Activated CD4-positive, alpha-beta T cell treated with anti-CD3 and anti-CD28 coated beads for 36 hours (primary cell): ENCODE measurements at regions of chr12 and their contacts with region 1.

Region 1: DNA sequence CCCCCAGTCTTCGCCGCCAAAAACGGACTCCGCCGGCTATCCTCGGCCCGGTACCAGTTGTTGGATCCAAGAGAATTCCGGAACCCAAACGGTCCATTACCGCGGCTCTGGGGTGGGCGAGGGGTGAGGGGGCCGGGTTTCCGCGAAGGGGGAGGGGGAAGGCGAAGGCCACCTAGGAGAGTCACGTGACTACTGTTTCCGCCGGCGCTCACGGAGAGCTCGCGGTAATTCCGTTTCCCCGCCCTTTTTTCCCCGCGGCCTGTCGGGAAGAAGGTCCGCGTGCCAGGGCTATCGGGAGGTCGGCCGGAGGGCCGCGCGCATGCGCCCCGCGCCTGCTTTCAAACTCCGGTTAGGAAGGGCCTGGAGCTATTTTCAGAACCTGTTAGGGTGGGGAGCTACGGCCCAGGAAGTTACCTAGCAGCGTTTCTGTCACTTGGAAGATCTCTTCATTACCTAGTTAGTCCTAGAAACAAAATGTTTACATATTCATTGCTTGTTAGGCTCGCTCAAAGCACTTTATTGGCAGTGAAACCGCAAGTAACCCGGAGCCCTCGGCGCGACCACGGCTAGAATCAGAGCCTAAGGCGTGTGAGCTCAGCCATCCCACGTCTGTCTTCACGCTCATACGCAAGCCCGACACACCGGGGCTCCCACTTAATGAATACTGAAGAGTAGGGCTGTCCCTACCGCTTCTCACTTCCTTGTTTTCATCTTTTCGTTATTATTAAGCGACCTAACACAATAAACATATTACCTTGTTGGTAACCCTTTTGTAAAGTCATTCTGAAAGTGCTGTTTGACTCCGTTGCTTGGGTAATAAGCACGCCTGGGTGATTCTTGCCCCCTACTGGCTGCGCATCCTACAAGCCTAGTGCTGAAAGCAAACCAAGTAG is 624 bp upstream of the SBNO1 start:
- DNase-seq: peak; percentile 98
- ATAC-seq: peak; percentile 82
- H3K4me3 Mint-ChIP-seq: peak overlapping the region; percentile 86
- H3K27ac Mint-ChIP-seq: peak overlapping the region; percentile 98
- H3K4me1 Mint-ChIP-seq: peaks cover 19% of the 10 kb centered on the region
- H3K27me3 Mint-ChIP-seq: no peaks in the 10 kb centered on the region

Region 2: GRCh38 chr12:122974274-122974891 is 390.9 kb before region 1 on chr12:
- CTCF ChIA-PET with region 1: no interaction called
- POLR2A ChIA-PET with region 1: interaction called, 3 read pairs
- intact Hi-C with region 1: loop called in 1 of 2 experiments (anchors 1 kb)
- DNase-seq: peak; percentile 99
- ATAC-seq: peak; percentile 86
- H3K4me3 Mint-ChIP-seq: peak overlapping the region; percentile 95
- H3K27ac Mint-ChIP-seq: peak overlapping the region; percentile 100
- H3K4me1 Mint-ChIP-seq: peaks cover 21% of the 10 kb centered on the region
- H3K27me3 Mint-ChIP-seq: no peaks in the 10 kb centered on the region

Region 3: DNA sequence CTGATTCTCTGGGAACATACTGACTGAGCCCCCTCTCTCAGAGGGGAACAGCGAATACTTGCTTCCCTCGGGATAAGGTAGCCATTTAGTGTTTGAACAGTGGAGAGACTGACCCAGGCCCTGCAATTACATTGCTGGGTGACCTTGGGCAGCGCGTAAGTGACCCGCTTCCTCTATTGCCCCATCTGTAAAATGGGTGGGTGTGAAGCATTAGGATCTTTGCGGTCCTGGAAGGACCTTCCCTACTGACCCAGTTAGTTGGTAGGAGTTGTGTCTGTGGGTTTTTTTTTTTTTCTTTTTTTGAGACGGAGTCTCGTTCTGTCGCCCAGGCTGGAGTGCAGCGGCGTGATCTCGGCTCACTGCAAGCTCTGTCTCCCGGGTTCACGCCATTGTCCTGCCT is 17.4 kb after region 1 on chr12:
- CTCF ChIA-PET with region 1: interaction called, 20 read pairs
- POLR2A ChIA-PET with region 1: interaction called, 35 read pairs
- intact Hi-C with region 1: loop called (anchors 1 kb)
- DNase-seq: no peak
- ATAC-seq: no peak
- H3K4me3 Mint-ChIP-seq: peak overlapping the region; percentile 50
- H3K27ac Mint-ChIP-seq: no peak overlapping the region
- H3K4me1 Mint-ChIP-seq: peaks cover 8% of the 10 kb centered on the region
- H3K27me3 Mint-ChIP-seq: no peaks in the 10 kb centered on the region

Region 4: GRCh38 chr12:123445388-123446351 is 80.4 kb after region 1 on chr12:
- CTCF ChIA-PET with region 1: interaction called, 4 read pairs
- POLR2A ChIA-PET with region 1: no interaction called
- intact Hi-C with region 1: loop called in 1 of 2 experiments (anchors 1 kb)
- DNase-seq: no peak
- ATAC-seq: no peak
- H3K4me3 Mint-ChIP-seq: no peak overlapping the region
- H3K27ac Mint-ChIP-seq: peak overlapping the region; percentile 70
- H3K4me1 Mint-ChIP-seq: peaks cover 30% of the 10 kb centered on the region
- H3K27me3 Mint-ChIP-seq: no peaks in the 10 kb centered on the region

Region 5: GRCh38 chr12:123601602-123602489 is 236.6 kb after region 1 on chr12 and contains the start of gene DDX55:
- CTCF ChIA-PET with region 1: interaction called, 6 read pairs
- POLR2A ChIA-PET with region 1: no interaction called
- intact Hi-C with region 1: loop called in 1 of 2 experiments (anchors 1 kb)
- DNase-seq: peak; percentile 93
- ATAC-seq: peak; percentile 95
- H3K4me3 Mint-ChIP-seq: peak within 1 kb of the TSS; percentile 85
- H3K27ac Mint-ChIP-seq: peak within 1 kb of the TSS; percentile 92
- H3K4me1 Mint-ChIP-seq: peaks cover 36% of the 10 kb centered on the region
- H3K27me3 Mint-ChIP-seq: no peaks in the 10 kb centered on the region
- total RNA-seq, gene DDX55: 44.3 to 49.4 TPM

Region 6: DNA sequence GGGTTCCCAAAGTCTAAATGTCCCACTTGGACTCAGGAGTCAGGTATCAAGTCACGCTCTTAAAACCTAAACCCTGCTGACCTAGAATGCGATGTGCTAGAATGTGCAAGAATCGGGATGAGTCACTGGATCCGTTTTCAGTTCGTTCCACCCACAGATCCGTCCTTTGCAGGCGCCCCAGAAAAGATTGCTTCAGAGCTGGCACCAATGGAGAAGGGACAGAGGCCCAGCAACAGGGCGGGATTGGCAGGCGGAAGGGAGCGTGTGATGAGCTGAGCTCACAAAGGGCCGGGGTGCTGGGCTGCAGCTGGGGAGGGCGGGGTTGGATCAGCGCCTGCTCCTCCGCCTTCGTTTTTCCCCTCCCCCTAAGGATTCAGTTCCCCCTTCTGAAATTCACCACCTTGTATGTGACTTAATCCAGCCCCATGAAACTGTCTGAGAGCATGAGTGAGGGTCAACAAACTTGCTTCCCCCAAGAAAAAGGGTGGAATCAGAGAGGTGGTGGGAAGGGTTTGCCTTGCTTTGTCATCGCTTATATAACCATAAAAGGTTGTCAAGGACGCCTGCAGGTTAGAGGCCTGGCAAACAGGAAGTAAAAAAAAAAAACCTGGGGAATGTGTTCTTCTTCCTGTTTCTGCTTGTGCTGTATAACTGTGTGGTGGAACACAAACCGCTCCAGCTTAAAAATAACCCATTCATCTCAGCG is 1552.0 kb after region 1 on chr12:
- CTCF ChIA-PET with region 1: no interaction called
- POLR2A ChIA-PET with region 1: no interaction called
- intact Hi-C with region 1: loop called in 1 of 2 experiments (anchors 10 kb)
- DNase-seq: peak; percentile 97
- ATAC-seq: peak; percentile 69
- H3K4me3 Mint-ChIP-seq: peak overlapping the region; percentile 100
- H3K27ac Mint-ChIP-seq: peak overlapping the region; percentile 100
- H3K4me1 Mint-ChIP-seq: peaks cover 86% of the 10 kb centered on the region
- H3K27me3 Mint-ChIP-seq: no peaks in the 10 kb centered on the region